Heart left ventricle (tissue), 16 donors: ENCODE measurements at regions of chr3 and their contacts with region 1.

Region 1: DNA sequence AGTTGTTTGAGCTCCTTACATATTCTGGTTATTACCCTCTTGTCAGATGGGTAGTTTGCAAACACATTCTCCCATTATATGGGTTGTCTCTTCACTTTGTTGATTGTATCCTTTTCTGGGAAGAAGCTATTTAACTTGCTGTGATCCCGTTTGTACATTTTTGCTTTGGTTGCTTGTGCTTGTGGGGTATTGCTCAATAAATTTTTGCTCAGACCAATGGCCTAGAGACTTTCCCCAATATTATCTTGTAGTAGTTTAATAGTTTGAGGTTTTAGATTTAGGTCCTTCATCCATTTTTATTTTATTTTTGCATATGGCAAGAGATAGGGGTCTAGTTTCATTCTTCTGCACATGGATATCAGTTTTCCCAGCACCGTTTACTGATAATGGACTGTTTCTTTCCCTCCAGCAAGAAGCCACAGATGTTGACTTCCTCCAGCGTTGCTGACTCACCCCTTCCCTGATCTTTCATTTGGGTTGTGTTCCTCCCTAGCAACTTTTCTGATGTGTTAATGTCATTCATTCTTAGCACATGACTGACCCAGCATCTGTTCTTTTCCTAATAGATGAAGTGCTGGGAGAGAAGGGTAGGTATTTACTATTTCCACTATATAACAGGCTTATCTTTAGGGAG is 166.7 kb upstream of the SGO1 start:
- DNase-seq: no peak
- ATAC-seq: no peak
- H3K4me3 ChIP-seq: no peak overlapping the region
- H3K27ac ChIP-seq: no peak overlapping the region
- H3K4me1 ChIP-seq: no peaks in the 10 kb centered on the region
- H3K27me3 ChIP-seq: no peaks in the 10 kb centered on the region
- CTCF ChIP-seq: no peak
- POLR2A ChIP-seq: no peak

Region 2: DNA sequence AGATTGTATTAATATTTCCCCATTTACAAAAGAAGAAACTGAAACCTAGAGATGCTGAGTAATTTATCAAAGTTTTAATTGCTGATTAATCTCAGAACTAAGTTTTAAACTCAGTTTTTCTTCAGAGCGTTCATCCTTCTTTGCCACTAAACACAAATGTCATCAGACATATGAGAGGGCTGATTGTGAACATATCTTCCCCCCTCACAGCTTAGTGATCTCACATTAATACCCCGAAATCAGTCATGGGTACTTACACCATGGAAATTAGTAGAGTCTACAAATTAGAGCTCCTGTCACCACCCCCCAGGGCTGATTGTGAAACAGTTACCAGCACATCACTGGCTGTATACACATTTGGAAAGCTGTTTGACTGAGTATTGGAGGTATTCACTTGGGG is 22.6 kb after region 1 on chr3:
- intact Hi-C with region 1: no loop called
- DNase-seq: no peak
- ATAC-seq: no peak
- H3K4me3 ChIP-seq: no peak overlapping the region
- H3K27ac ChIP-seq: no peak overlapping the region
- H3K4me1 ChIP-seq: peaks cover 0 to 10% (median 0%) of the 10 kb centered on the region in 12 donors
- H3K27me3 ChIP-seq: no peaks in the 10 kb centered on the region
- CTCF ChIP-seq: no peak
- POLR2A ChIP-seq: no peak

Region 3: DNA sequence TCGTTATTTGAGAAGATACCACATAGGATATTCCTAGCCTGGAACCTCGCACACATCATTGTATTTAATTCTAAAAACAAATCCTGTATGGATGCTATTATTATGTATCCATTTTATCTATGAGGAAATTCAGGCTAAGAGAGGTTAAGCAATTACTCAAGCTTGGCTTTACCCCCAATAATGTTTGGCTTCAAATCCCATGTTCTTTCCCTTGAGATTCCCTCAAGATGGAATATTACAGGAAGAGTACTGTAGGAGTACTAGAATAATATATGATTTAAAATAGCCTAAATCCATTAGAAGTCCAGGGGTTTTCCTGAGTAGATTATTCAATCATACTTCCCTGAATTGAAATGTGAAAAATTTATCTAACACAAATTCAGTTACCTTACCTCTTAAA is 768.2 kb after region 1 on chr3:
- intact Hi-C with region 1: loop called in 1 of 10 experiments (anchors 10 kb)
- DNase-seq: no peak
- ATAC-seq: no peak
- H3K4me3 ChIP-seq: no peak overlapping the region
- H3K27ac ChIP-seq: no peak overlapping the region
- H3K4me1 ChIP-seq: no peaks in the 10 kb centered on the region
- H3K27me3 ChIP-seq: no peaks in the 10 kb centered on the region
- CTCF ChIP-seq: no peak
- POLR2A ChIP-seq: no peak